Naive thymus-derived CD4-positive, alpha-beta T cell (primary cell): ENCODE measurements at regions of chr6 and their contacts with region 1.

Region 1: GRCh38 chr6:24874776-24875534 is 60.8 kb downstream of the RIPOR2 start:
- DNase-seq: no peak
- ATAC-seq: peak; percentile 42
- H3K4me3 ChIP-seq: no peak overlapping the region
- H3K4me3 Mint-ChIP-seq: peak overlapping the region in 1 of 10 donors; percentile 41
- H3K27ac ChIP-seq: peak overlapping the region; percentile 42
- H3K27ac Mint-ChIP-seq: peak overlapping the region in 8 of 9 donors; percentile 42 to 93 (median 84)
- H3K4me1 ChIP-seq: peaks cover 21 to 49% of the 10 kb centered on the region in 2 donors
- H3K4me1 Mint-ChIP-seq: peaks cover 32 to 94% (median 81%) of the 10 kb centered on the region in 7 donors
- H3K27me3 ChIP-seq: no peaks in the 10 kb centered on the region
- H3K27me3 Mint-ChIP-seq: no peaks in the 10 kb centered on the region

Region 2: DNA sequence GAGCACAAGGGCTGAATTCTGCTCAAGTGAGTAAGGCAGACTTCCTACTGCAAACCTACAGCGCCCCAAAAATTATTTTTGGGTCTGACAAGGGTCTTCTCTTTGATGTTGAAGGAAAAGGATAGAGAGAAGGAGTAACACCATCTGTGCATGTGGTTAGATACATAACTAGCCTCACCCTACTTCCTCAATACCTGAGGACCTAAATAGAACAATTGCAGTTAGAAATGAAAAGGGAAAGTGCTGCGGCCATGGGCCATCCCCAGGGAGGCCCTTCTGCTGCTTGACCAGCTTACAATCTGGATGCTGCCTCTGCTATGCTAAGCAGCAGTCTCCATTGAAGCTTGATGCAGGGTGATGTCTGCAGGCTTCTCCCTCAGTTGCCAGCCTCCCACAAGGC is 13.0 kb before region 1 on chr6:
- CTCF ChIA-PET with region 1: interaction called, 5 read pairs
- POLR2A ChIA-PET with region 1: interaction called, 7 read pairs
- intact Hi-C with region 1: loop called in 1 of 2 experiments (anchors 1 kb)
- DNase-seq: no peak
- ATAC-seq: no peak
- H3K4me3 ChIP-seq: no peak overlapping the region
- H3K4me3 Mint-ChIP-seq: peak overlapping the region in 9 of 10 donors; percentile 14 to 89 (median 73)
- H3K27ac ChIP-seq: peak overlapping the region; percentile 72
- H3K27ac Mint-ChIP-seq: peak overlapping the region in 8 of 9 donors; percentile 86 to 98 (median 93)
- H3K4me1 ChIP-seq: peaks cover 64 to 89% of the 10 kb centered on the region in 2 donors
- H3K4me1 Mint-ChIP-seq: peaks cover 70 to 100% (median 94%) of the 10 kb centered on the region in 7 donors
- H3K27me3 ChIP-seq: no peaks in the 10 kb centered on the region
- H3K27me3 Mint-ChIP-seq: no peaks in the 10 kb centered on the region

Region 3: GRCh38 chr6:24891004-24891403 is 16.0 kb after region 1 on chr6:
- CTCF ChIA-PET with region 1: interaction called, 6 read pairs
- POLR2A ChIA-PET with region 1: interaction called, 4 read pairs
- intact Hi-C with region 1: loop called in 1 of 2 experiments (anchors 1 kb)
- DNase-seq: no peak
- ATAC-seq: no peak
- H3K4me3 ChIP-seq: no peak overlapping the region
- H3K4me3 Mint-ChIP-seq: peak overlapping the region in 9 of 10 donors; percentile 11 to 97 (median 48)
- H3K27ac ChIP-seq: peak overlapping the region; percentile 60
- H3K27ac Mint-ChIP-seq: peak overlapping the region in 8 of 9 donors; percentile 30 to 98 (median 88)
- H3K4me1 ChIP-seq: peaks cover 56 to 72% of the 10 kb centered on the region in 2 donors
- H3K4me1 Mint-ChIP-seq: peaks cover 58 to 97% (median 90%) of the 10 kb centered on the region in 7 donors
- H3K27me3 ChIP-seq: no peaks in the 10 kb centered on the region
- H3K27me3 Mint-ChIP-seq: no peaks in the 10 kb centered on the region

Region 4: GRCh38 chr6:25202505-25202904 is 327.6 kb after region 1 on chr6:
- CTCF ChIA-PET with region 1: no interaction called
- POLR2A ChIA-PET with region 1: no interaction called
- intact Hi-C with region 1: no loop called
- DNase-seq: no peak
- ATAC-seq: no peak
- H3K4me3 ChIP-seq: no peak overlapping the region
- H3K4me3 Mint-ChIP-seq: no peak overlapping the region
- H3K27ac ChIP-seq: no peak overlapping the region
- H3K27ac Mint-ChIP-seq: no peak overlapping the region
- H3K4me1 ChIP-seq: no peaks in the 10 kb centered on the region
- H3K4me1 Mint-ChIP-seq: no peaks in the 10 kb centered on the region
- H3K27me3 ChIP-seq: no peaks in the 10 kb centered on the region
- H3K27me3 Mint-ChIP-seq: peaks cover 0 to 25% (median 5%) of the 10 kb centered on the region in 5 donors